ENCODE measurements at regions of chr22 and their contacts with region 1.

Region 1: DNA sequence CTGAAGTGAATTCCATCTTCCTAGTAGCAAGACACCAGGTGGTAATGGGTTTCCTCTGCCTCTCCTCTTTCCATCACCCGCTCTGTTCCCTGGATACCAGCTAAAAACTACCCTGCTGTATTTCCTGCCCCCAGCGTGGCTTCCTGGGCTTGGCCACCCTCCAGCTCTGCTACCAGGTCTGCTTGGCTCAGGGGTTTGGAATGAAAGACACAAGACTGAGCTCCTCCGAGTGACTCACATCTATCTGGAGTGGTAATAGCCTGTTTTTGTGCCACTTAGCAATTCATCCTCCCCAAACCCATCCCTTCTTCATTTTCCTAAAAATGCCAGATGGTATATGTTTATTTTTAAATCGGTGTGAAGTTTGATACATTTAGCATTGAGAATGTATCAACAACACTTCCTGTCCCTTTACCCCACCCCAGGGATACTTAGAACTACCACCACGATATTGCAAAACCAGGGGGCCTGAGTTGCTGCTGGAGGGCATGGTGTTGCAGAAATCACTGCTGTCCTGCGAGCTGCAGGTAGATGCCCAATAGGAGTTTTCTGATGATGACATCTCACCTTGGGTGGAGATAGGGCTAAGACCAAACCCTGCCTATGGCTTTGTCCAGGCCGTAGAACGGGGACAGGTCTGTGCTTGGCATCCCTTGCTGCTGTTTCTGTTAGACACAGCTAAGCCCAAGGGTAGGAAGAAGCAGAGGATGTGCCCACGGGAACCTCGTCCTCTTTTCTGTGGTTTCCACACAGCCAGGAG is 7.5 kb upstream of the MICAL3 start:
- DNase-seq: no peak
- ATAC-seq: no peak
- H3K4me3 Mint-ChIP-seq: no peak overlapping the region
- H3K27ac Mint-ChIP-seq: no peak overlapping the region
- H3K4me1 Mint-ChIP-seq: no peaks in the 10 kb centered on the region
- H3K27me3 Mint-ChIP-seq: no peaks in the 10 kb centered on the region
- CTCF ChIP-seq: no peak

Region 2: DNA sequence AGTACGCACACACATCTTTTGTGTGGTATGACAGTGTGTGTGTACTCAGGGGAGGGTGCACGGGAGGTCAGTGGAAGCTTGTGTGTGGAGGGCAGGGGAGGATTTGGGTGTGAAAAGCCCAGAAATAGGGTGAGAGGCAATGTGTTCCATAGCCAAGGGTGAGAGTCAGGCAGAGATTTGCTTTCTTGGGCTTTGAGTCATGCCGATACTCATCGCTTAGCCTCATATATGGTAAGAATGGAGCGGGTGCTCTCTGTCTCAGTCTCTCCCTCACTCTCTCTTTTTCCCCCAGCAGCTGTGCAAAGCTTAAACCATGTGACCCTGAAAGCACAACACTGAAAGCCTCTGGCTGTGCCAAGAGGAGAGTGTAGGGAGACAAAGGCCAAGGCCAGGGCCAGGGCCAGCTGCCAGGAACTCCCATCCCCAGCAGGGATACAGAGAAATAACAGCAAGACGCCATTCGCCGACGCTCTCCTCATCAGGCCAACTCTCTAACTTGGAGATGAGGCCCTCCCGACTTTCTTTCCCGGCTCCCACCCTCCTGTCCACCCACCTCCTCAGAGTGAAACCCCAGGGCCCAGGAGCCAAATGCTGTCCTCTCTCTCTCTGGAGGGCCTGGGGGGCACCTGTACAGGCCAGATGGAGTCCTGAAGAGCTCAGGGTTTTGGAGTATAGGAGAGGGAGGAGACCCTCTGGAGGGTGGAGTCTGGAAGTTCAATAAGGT is 12.8 kb after region 1 on chr22:
- CTCF ChIA-PET with region 1: no interaction called
- POLR2A ChIA-PET with region 1: interaction called, 15 read pairs
- intact Hi-C with region 1: no loop called
- DNase-seq: no peak
- ATAC-seq: no peak
- H3K4me3 Mint-ChIP-seq: no peak overlapping the region
- H3K27ac Mint-ChIP-seq: no peak overlapping the region
- H3K4me1 Mint-ChIP-seq: peaks cover 2% of the 10 kb centered on the region
- H3K27me3 Mint-ChIP-seq: no peaks in the 10 kb centered on the region
- CTCF ChIP-seq: no peak